PC-3 (cell line): ENCODE measurements at regions of chr17 and their contacts with region 1.

Region 1: GRCh38 chr17:82246365-82247174 is 17.7 kb downstream of the SLC16A3 start:
- DNase-seq: peak; percentile 94
- ATAC-seq: peak; percentile 63
- H3K4me3 ChIP-seq: no peak overlapping the region
- H3K27ac ChIP-seq: peak overlapping the region; percentile 94
- H3K4me1 ChIP-seq: peaks cover 30% of the 10 kb centered on the region
- H3K27me3 ChIP-seq: no peaks in the 10 kb centered on the region
- CTCF ChIP-seq: no peak

Region 2: GRCh38 chr17:82315703-82316358 is 69.3 kb after region 1 on chr17:
- CTCF ChIA-PET with region 1: interaction called, 3 read pairs
- POLR2A ChIA-PET with region 1: no interaction called
- intact Hi-C with region 1: loop called (anchors 1 kb)
- DNase-seq: no peak
- ATAC-seq: peak; percentile 42
- H3K4me3 ChIP-seq: no peak overlapping the region
- H3K27ac ChIP-seq: no peak overlapping the region
- H3K4me1 ChIP-seq: no peaks in the 10 kb centered on the region; the same call in 1 of the 2 replicates
- H3K27me3 ChIP-seq: no peaks in the 10 kb centered on the region
- CTCF ChIP-seq: no peak